PC-9 (cell line): ENCODE measurements at regions of chr11 and their contacts with region 1.

Region 1: GRCh38 chr11:118592616-118593367 is 14.6 kb upstream of the PHLDB1 start:
- DNase-seq: no peak
- H3K4me3 ChIP-seq: no peak overlapping the region
- H3K27ac ChIP-seq: no peak overlapping the region
- H3K4me1 ChIP-seq: no peaks in the 10 kb centered on the region
- H3K27me3 ChIP-seq: no peaks in the 10 kb centered on the region
- CTCF ChIP-seq: no peak

Region 2: GRCh38 chr11:118883368-118884071 is 290.7 kb after region 1 on chr11 and contains the start of gene CXCR5:
- CTCF ChIA-PET with region 1: no interaction called
- POLR2A ChIA-PET with region 1: no interaction called
- intact Hi-C with region 1: no loop called
- DNase-seq: no peak
- H3K4me3 ChIP-seq: no peak within 1 kb of the TSS
- H3K27ac ChIP-seq: no peak within 1 kb of the TSS
- H3K4me1 ChIP-seq: peaks cover 18% of the 10 kb centered on the region
- H3K27me3 ChIP-seq: no peaks in the 10 kb centered on the region
- CTCF ChIP-seq: no peak
- total RNA-seq, gene CXCR5: not detected in 2 replicates

Region 3: DNA sequence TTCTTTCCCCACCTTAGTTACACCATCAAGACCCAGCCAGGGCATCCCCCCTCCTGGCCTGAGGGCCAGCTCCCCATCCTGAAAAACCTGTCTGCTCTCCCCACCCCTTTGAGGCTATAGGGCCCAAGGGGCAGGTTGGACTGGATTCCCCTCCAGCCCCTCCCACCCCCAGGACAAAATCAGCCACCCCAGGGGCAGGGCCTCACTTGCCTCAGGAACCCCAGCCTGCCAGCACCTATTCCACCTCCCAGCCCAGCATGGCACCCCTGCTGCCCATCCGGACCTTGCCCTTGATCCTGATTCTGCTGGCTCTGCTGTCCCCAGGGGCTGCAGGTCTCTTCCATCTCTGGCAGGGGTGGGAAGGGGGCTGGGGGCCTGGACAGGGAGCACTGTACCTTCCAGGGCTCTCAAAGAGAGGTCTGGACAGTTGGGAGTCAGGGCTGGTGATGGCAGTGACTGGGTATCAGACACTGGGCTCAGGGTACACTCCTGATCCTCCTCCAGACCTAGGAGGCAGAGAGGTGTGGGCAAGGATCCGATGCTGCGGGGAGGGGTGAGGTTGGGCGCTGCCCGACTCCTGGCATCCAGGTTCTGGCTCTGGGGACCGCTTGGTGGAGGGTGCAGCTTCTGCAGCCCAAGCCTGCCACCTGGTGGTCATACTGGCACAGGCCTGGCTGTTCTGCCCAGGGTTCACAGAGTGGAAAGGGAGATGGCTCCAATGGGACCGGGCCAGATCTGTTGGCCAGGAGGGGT is 363.5 kb after region 1 on chr11 and contains the start of gene UPK2:
- CTCF ChIA-PET with region 1: no interaction called
- POLR2A ChIA-PET with region 1: no interaction called
- intact Hi-C with region 1: loop called (anchors 10 kb)
- DNase-seq: peak; percentile 92 to 93
- H3K4me3 ChIP-seq: peak within 1 kb of the TSS; percentile 49
- H3K27ac ChIP-seq: peak within 1 kb of the TSS; percentile 62
- H3K4me1 ChIP-seq: peaks cover 26% of the 10 kb centered on the region
- H3K27me3 ChIP-seq: no peaks in the 10 kb centered on the region
- CTCF ChIP-seq: peak; percentile 97
- total RNA-seq, gene UPK2: 17.1 and 23.2 TPM in 2 replicates